ENCODE measurements at regions of chr9 and their contacts with region 1.

Region 1: DNA sequence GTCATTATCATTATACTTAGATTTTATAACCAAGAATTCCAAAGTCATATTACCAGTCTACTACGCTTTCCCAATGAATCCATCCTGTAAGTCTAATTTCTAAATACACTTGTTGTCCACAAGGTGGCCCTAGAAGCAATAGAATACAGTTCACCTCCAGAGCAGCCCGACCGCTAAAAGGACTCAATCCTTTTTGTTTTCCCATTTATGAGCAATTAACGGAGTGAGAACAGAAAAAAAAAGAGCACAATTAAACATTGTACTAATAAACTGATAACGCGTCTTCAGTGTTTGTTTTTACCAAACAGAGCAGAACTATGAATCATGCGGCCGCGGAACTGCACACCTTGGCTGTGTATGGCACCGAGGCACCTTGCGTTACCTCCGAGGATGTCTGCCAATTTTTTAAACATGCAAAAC is 160.7 kb upstream of the DAPK1 start:
- DNase-seq: no peak
- H3K4me3 ChIP-seq: peak overlapping the region; percentile 50 to 55
- H3K27ac ChIP-seq: no peak overlapping the region
- H3K4me1 ChIP-seq: peaks cover 0 to 5% of the 10 kb centered on the region in 2 donors
- H3K27me3 ChIP-seq: no peaks in the 10 kb centered on the region
- CTCF ChIP-seq: peak; percentile 44 to 70 (median 53)

Region 2: GRCh38 chr9:87640385-87640795 is 303.5 kb after region 1 on chr9:
- intact Hi-C with region 1: loop called (anchors 10 kb)
- DNase-seq: no peak
- H3K4me3 ChIP-seq: no peak overlapping the region
- H3K27ac ChIP-seq: no peak overlapping the region
- H3K4me1 ChIP-seq: no peaks in the 10 kb centered on the region
- H3K27me3 ChIP-seq: no peaks in the 10 kb centered on the region
- CTCF ChIP-seq: no peak